Right ventricle myocardium inferior (tissue), 1 donor: ENCODE measurements at regions of chr6 and their contacts with region 1.

Region 1: DNA sequence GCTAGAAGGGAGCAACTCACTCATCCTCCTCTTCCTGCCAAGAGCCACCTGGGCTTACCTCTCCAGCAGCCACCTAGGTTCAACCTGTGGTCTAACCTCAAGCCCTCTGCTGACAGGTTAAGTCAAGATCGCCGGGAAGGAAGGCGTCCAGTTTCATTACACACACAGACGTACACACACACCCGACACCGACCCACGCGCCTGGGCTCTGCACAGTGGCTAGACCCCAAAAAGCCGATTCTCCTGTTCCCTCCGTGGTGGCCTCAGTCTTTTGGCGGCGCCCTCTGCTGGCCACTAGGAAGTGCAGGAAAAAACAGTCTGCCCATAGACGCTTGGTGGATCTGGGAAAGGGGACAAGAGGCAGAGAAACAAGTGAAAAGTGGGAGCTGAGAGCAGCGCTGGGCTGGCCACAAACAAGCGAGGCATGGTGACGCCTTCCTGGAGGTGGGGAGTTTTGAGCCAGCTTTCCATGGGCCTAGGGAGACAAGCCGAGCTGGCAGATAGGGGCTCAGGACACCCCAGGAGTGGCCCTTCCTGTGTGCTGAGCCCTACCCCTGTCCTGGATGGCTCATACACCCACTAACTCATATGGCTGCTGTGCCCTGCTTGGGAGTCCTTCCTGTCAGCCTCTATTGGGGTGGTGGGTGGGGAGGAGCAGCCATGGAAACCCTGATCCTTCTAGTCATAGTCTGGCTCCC is 52.7 kb downstream of the MRPL14 start:
- DNase-seq: peak; percentile 88
- ATAC-seq: peak; percentile 72

Region 2: DNA sequence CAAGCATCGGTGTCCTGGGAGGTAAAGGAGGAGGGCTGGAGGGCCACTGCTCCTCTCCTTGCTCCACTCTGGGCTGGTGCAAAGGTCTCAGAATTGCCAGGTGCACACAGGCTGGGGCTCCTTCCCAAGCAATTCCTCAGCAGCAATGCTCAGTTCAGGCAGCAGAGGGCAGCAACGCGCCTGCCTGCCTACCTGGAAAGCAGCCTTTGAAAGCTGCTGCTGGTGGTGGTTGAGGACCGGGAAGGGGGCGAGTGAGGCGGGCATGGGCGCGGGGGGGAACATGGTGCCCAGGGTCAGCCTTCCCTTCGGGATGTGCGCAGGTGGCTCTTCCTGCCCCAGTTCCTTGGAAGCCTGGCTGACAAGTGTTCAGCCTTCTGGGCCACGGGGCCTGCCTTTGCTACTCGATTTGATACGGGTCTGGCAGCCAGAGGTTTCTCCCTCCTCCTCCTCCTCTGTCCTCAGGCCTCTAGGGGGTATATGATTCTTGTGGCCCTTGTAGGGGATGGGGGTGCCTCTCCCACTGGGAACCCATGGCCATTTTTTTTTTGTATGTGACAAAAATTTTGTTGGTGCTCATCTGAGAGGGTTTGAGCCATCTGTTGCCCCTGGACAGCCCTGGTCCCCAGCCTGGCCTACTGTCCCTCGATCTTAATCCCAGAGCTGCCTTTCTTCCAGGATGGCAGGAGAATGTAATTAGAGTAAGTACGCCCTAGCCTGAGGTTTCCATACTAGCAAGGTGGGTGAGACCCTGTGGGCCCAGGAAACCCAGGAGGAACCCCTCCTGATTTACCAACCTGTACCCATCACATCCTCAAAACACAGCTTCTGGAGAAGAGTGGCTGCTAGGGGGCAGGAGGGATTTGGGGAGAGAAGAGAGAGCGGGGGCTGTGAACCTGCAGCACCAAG is 407.1 kb before region 1 on chr6:
- intact Hi-C with region 1: loop called (anchors 1 kb)
- DNase-seq: peak; percentile 89
- ATAC-seq: peak; percentile 41

Region 3: GRCh38 chr6:43769526-43770416 is 304.8 kb before region 1 on chr6 and contains the start of gene VEGFA:
- intact Hi-C with region 1: loop called (anchors 1 kb)
- DNase-seq: peak; percentile 95
- ATAC-seq: peak; percentile 79
- total RNA-seq, gene VEGFA: 242 TPM

Region 4: DNA sequence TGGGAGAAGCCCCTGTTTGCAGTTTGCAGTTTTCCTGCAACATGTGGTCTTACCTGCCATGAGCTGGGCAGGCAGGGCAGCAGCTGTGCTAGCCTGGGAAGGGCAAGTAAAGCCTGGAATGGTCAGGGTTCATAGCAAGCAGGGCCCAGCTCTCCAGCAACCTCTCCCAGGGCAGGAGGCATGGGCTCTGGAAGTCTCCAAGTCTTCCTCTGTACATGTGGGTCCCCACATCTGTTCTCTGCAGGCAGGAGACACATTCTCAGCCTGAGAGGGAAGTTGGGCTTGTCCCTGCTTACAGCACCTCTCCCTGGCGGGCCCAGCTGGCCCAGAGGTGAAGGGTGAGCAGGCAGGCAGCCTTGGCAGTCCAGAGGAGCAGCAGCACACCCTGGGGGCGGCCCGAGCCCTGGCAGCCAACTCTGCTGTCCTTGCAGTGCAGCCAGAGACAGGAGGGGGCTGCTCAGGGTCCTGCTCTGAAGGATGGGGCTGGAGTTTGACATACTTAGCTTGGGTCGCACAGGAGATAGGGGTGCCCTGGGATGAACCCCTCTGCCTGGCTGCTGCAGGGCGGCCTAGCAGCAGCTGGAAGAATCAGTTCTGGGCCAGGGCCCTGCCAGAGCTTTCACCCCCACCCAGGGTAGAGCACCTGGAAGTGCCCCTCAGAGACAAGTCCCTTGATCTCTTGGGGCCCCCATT is 123.4 kb before region 1 on chr6:
- intact Hi-C with region 1: loop called (anchors 1 kb)
- DNase-seq: peak; percentile 85
- ATAC-seq: peak; percentile 58

Region 5: DNA sequence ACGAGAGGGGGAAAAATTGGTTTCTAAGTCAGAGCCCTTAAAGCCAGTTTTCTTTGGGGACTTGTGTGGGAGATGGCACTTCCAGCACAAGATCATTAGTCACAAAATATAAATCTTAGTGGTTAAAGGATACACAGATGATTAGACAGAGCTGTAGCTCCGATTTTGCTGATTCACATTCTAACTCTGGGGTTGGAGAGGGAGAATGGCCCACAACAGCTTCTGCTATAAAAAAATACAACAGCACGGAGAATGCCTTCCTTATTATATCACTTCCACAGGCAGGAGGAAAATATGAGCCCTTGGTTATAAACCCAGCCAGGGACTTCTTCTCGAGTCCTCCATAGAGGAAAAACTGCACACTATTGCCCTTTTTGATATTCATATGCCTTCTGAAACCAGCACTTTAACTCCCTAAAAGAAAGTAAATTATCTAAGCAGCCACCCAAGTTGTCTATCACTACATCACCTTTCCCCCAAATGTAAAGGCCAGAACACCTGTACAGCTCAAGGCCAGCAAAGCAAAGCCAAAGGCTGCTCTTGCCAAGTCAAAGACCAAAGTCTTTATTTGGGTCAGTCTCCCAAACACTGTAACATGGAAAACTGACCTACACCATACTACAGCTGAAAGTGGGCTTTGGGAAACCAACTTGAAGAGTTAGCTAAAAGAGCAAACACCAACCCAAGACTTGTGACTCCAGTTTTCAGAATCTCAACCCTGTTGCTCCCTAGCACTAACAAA is 42.2 kb after region 1 on chr6:
- intact Hi-C with region 1: no loop called
- DNase-seq: no peak
- ATAC-seq: no peak

Region 6: DNA sequence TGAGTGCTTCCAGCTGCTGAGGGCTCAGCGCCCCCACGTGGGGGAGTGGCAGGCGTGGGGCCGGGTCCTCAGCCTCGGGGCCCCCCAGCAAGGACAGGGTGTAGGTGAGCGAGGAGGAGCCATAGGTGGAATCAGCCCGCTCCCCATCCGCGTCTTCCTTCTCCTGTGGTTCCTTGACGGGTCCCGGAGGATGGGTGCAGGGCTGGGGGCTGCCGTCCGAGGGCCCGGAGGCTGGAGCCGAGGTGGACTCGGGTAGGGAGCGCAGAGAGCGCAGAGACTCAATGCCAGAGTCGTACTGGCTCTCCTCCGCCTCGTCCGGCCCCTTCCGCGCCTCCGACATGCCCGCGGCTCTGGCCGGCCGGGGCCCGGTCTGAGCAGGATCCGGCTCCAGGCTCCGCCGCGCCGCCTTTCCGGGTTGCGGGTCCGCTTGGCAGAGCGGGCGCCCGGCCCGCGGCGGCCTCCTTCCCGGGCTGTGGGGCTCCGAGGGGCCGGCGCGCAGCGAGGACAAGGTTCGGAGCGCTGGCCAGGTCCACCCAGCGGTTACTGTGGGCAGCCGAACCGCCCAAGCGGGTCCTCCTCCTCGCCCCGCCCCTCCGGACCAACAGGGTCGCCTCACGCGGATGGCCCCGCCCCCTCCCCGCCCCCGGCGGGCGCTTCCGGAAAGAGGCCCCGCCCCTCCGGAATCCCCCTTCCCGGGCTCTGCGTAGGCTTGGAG is 190.6 kb after region 1 on chr6 and contains the start of gene NFKBIE:
- intact Hi-C with region 1: no loop called
- DNase-seq: peak; percentile 97
- ATAC-seq: peak; percentile 96
- total RNA-seq, gene NFKBIE: 2.4 TPM